WTC11 (cell line): ENCODE measurements at regions of chr19 and their contacts with region 1.

Region 1: DNA sequence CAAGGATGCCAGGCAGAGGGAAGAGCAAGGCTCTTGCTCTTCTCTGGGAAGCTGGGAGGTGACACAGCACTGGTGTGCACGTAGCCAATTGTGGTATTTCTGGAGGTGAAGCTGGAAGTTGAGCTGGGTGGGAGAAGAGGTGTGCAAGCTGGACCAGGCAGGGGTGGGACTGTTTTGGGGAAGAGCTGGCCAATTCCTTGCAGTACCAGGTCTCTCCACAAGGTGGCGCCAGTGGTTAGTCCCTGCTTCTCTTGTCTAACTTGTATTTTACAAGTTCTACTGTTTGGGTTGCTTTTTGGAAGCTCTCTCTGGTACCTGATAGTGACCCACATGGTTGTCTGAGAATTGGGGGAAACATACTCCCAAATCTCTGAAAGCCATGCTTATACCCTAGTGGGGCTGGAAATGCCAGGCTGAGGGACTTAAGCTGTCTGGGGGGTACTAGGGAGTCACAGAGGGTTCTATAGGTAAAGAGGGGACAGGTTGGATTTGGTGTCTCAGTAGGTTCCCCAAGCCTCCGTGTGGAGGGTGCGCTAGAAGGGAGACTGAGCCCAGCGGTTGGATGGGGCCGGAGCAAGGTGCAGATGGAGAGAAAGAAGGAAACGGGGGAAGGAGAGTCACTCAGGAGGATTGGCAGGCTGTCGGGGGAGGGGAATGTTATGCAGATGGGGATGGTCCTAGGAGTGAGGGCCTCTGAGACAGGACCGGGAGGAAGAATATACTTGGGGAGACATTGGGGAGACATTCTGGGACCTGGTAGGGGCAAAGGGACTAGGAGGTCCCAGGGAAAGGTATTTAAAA is 3.0 kb downstream of the HPN start:
- DNase-seq: peak; percentile 83
- ATAC-seq: no peak
- H3K4me3 Mint-ChIP-seq: no peak overlapping the region; the same call in 1 of the 2 replicates
- H3K27ac Mint-ChIP-seq: peak overlapping the region; percentile 15; the same call in 1 of the 2 replicates
- H3K4me1 Mint-ChIP-seq: peaks cover 50% of the 10 kb centered on the region
- H3K27me3 Mint-ChIP-seq: no peaks in the 10 kb centered on the region
- CTCF ChIP-seq: peak; percentile 99

Region 2: DNA sequence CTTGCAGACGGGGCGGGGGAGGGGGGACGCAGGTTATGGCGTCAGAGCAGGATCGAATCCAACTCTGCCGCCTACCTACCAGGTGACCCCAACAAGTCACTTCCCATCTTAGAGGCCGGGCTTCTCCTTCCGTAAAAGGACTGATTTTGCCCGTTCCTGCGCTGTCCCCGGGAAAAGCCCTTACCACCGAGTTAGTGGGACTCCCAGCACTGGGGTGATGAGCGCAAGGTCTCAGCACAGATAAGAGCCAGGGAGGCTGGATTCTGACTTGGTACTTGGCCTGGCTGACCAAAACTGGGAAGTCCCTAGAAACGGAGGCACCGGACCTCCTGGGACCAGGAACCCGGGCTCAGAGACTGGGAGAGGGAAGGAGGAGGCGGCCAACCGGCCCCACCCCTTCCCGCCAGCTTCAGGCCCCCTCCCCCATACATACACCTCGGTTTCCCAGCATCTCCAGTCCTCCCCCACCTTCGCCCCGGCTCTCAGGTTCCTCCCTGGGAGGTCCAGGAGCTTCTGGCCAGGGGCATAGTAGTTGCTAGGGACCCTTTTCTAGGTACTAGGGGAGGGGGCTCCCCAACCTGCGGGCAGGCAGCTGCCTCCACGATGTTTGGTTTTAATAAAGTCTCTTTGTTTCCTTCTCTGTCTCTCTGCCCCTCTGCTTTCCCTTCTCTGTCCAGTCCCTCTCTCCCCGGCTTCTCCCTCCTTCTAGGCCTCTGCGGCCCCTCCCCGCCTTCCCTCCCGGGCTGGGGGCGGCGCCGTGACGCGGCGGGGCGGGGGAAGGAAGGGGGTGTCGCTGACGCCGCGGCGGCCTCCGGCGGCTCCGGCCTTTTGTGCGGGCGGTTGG is 44.8 kb before region 1 on chr19 and contains the start of gene GRAMD1A:
- CTCF ChIA-PET with region 1: interaction called, 15 read pairs
- POLR2A ChIA-PET with region 1: interaction called, 3 read pairs
- DNase-seq: peak; percentile 82
- ATAC-seq: peak; percentile 46
- H3K4me3 Mint-ChIP-seq: peak within 1 kb of the TSS; percentile 100
- H3K27ac Mint-ChIP-seq: peak within 1 kb of the TSS; percentile 98
- H3K4me1 Mint-ChIP-seq: peaks cover 64% of the 10 kb centered on the region
- H3K27me3 Mint-ChIP-seq: no peaks in the 10 kb centered on the region
- CTCF ChIP-seq: no peak
- total RNA-seq, gene GRAMD1A: 235 to 389 TPM (median 236 TPM) in 3 replicates

Region 3: GRCh38 chr19:35030257-35031071 is 14.1 kb before region 1 on chr19 and contains the start of gene SCN1B:
- CTCF ChIA-PET with region 1: interaction called, 14 read pairs
- POLR2A ChIA-PET with region 1: interaction called, 6 read pairs
- DNase-seq: peak; percentile 70
- ATAC-seq: peak; percentile 60
- H3K4me3 Mint-ChIP-seq: peak within 1 kb of the TSS; percentile 79
- H3K27ac Mint-ChIP-seq: no peak within 1 kb of the TSS
- H3K4me1 Mint-ChIP-seq: peaks cover 8% of the 10 kb centered on the region
- H3K27me3 Mint-ChIP-seq: peaks cover 48% of the 10 kb centered on the region
- CTCF ChIP-seq: no peak
- total RNA-seq, gene SCN1B: 4.4 to 8.0 TPM (median 4.8 TPM) in 3 replicates

Region 4: DNA sequence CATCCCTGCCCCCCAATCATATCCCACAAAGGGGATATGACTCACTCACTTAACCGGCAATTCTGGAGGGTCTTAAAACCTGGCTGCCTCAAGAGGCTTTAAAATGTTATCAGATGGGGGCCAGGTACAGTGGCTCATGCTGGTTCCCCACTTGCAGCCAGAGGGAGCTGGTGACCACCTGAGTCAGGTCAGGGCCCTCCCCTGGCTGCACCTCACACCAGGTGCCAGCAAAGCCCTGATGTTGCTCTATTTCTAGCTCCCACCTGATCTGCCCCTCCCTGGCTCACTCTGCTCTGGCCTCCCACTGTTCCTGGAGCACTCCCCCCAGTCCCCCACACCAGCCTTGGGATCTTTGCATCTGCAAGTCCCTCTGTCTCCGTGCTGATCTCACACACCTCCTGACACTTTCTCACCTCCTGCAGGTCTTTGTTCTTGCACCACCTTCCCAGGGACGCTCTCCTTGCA is 11.2 kb after region 1 on chr19:
- CTCF ChIA-PET with region 1: interaction called, 80 read pairs
- POLR2A ChIA-PET with region 1: interaction called, 3 read pairs
- DNase-seq: peak; percentile 83
- ATAC-seq: peak; percentile 96
- H3K4me3 Mint-ChIP-seq: peak overlapping the region; percentile 18
- H3K27ac Mint-ChIP-seq: peak overlapping the region; percentile 43; the same call in 1 of the 2 replicates
- H3K4me1 Mint-ChIP-seq: peaks cover 19% of the 10 kb centered on the region
- H3K27me3 Mint-ChIP-seq: no peaks in the 10 kb centered on the region; the same call in 1 of the 2 replicates
- CTCF ChIP-seq: peak; percentile 36

Region 5: GRCh38 chr19:35080613-35081170 is 36.2 kb after region 1 on chr19:
- CTCF ChIA-PET with region 1: interaction called, 11 read pairs
- POLR2A ChIA-PET with region 1: no interaction called
- DNase-seq: no peak
- ATAC-seq: no peak
- H3K4me3 Mint-ChIP-seq: no peak overlapping the region
- H3K27ac Mint-ChIP-seq: no peak overlapping the region
- H3K4me1 Mint-ChIP-seq: peaks cover 9% of the 10 kb centered on the region
- H3K27me3 Mint-ChIP-seq: no peaks in the 10 kb centered on the region; the same call in 1 of the 2 replicates
- CTCF ChIP-seq: no peak

Region 6: GRCh38 chr19:35090506-35091237 is 46.2 kb after region 1 on chr19:
- CTCF ChIA-PET with region 1: interaction called, 11 read pairs
- POLR2A ChIA-PET with region 1: no interaction called
- DNase-seq: peak; percentile 72
- ATAC-seq: peak; percentile 87
- H3K4me3 Mint-ChIP-seq: peak overlapping the region; percentile 55
- H3K27ac Mint-ChIP-seq: no peak overlapping the region
- H3K4me1 Mint-ChIP-seq: peaks cover 15% of the 10 kb centered on the region
- H3K27me3 Mint-ChIP-seq: peaks cover 5% of the 10 kb centered on the region
- CTCF ChIP-seq: peak; percentile 74

Region 7: DNA sequence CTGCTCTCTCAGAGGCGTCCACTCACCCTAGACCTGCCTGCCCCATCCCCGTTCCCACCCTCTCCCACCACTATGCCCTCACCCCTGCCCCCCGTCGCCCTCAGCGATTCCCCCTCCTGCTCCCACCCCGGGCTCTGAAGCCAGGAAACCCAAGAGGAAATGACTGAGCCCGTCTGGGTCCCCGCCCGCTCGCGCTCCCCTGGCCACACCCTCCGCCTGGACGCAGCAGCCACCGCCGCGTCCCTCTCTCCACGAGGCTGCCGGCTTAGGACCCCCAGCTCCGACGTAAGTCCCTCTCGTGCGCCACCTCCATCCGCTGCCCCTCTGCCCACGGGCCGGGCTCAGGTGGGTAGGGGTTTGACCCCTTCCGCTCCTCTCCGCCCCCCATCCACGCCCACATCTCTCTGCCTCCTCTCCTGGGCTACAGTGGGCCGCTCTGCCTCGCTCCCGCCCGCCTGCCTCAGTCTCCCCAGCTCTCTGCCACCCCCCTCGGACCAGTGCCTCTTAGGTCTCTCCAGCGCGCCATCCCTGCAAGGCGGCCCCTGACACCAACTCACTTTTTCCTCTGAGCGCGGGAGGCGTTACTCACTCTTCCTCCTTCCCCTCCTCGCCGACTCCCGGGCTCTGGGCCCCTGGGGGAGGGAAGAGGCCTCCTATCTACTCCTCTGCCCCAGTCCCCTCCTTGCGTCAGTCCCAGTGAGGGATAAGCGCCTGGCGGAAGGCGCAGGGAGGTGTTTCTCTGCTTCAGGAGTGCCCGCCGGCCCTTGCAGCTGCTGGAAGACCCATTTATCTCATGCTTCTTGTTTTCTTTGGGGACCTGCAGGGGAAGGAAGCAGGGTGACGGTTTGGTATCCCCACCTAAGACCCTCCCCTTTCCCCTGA is 110.2 kb after region 1 on chr19 and contains the start of gene FXYD5:
- CTCF ChIA-PET with region 1: interaction called, 10 read pairs
- POLR2A ChIA-PET with region 1: no interaction called
- DNase-seq: peak; percentile 64
- ATAC-seq: peak; percentile 45
- H3K4me3 Mint-ChIP-seq: peak within 1 kb of the TSS; percentile 97
- H3K27ac Mint-ChIP-seq: peak within 1 kb of the TSS; percentile 58
- H3K4me1 Mint-ChIP-seq: peaks cover 53% of the 10 kb centered on the region
- H3K27me3 Mint-ChIP-seq: no peaks in the 10 kb centered on the region; the same call in 1 of the 2 replicates
- CTCF ChIP-seq: no peak
- total RNA-seq, gene FXYD5: 114 to 135 TPM (median 128 TPM) in 3 replicates

Region 8: GRCh38 chr19:35236638-35237400 is 192.3 kb after region 1 on chr19:
- CTCF ChIA-PET with region 1: no interaction called
- POLR2A ChIA-PET with region 1: no interaction called
- DNase-seq: no peak
- ATAC-seq: peak; percentile 72
- H3K4me3 Mint-ChIP-seq: no peak overlapping the region
- H3K27ac Mint-ChIP-seq: no peak overlapping the region
- H3K4me1 Mint-ChIP-seq: no peaks in the 10 kb centered on the region
- H3K27me3 Mint-ChIP-seq: peaks cover 18% of the 10 kb centered on the region
- CTCF ChIP-seq: no peak